RWPE1 (cell line): ENCODE measurements at regions of chr17 and their contacts with region 1.

Region 1: DNA sequence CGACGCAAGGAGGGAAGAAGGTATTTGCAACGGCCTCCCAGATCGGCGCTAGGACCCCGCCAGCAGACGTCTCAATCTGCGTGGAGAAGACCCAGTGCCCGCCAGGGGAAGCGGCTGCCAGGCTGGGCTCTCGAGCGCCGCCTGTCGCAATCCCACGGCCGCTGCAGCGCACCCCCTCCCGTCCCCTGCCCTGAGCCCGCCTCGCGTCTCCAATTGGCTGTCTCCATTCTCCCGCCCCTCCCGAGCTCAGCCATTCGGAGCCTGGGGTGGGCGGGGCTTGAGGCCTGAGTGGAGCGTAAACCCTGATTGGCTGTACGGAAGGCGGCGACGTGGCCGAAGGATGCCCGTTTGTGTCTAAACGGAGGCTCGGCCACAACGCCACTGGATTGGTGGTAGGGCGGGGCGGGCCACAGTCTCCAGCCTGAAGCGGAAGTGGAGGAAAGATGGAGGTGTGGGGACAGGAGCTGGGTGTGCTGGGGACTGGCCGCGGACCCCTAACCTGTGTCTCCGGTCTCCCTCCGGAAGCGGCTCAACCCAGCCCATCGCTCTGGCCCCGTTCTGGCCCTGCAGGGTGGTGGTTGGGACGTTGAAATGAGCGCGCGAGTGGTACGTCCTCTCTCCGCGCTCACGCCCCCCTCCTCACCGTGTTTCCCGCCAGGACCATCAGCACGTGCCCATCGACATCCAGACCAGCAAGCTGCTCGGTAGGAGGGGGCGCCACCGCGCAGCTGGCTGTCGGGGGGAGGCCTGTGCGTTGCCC is at the start of gene CDK5RAP3:
- DNase-seq: peak; percentile 97
- H3K27ac ChIP-seq: peak within 1 kb of the TSS; percentile 78
- CTCF ChIP-seq: peak; percentile 100

Region 2: DNA sequence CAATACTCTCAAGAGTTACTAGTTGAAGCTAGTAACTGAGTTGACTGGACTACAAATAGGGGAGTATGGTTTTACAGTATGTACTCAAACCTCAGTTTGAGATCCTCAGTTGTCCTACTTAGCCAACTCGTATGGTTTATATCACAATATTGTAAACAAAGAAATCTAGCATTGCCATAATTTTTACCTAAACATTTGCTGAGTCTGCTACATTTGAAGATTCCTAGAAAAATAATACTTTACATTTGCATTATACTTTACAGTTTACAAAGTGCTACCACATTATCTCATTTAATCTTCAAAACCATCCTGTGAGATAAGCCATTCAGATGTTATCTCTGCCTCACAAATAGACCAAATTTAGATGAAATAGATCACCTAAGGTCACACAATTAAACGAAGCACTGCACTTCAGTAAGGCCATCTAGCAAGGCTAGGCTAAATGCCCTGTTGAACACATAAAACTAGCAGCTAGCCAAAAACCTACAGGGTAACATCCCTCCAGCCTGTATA is 114.1 kb after region 1 on chr17:
- CTCF ChIA-PET with region 1: no interaction called
- POLR2A ChIA-PET with region 1: interaction called, 13 read pairs
- DNase-seq: no peak
- H3K27ac ChIP-seq: no peak overlapping the region; the same call in 1 of the 2 replicates
- CTCF ChIP-seq: no peak